ENCODE measurements at regions of chr18 and their contacts with region 1.

Region 1: GRCh38 chr18:65906621-65907034 is 155.8 kb downstream of the CDH7 start:
- DNase-seq: peak; percentile 60 to 71
- H3K4me3 ChIP-seq: no peak overlapping the region
- H3K4me3 Mint-ChIP-seq: no peak overlapping the region
- H3K27ac Mint-ChIP-seq: no peak overlapping the region
- H3K4me1 ChIP-seq: peaks cover 11% of the 10 kb centered on the region; the same call in 1 of the 2 replicates
- H3K4me1 Mint-ChIP-seq: peaks cover 6% of the 10 kb centered on the region
- H3K27me3 ChIP-seq: no peaks in the 10 kb centered on the region
- H3K27me3 Mint-ChIP-seq: no peaks in the 10 kb centered on the region
- CTCF ChIP-seq: no peak

Region 2: DNA sequence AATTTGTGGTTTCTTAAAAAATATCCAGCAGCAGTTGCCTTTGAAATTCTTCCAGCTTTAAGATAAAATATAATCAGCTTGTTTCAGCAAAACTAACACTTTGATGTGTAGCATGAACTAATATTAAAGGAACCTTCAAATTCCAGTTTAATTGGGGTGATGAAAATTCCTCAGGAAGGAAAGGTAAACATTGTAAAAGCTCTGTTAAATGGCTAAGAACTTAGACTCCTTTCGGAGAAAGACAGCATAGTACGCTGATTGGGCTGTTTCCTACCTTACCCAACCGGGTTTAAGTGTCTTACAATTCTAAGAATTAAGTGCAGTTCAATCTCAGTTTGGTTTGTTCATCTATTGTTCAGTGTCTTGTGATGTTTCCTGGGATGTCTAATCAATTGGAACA is 47.6 kb before region 1 on chr18:
- CTCF ChIA-PET with region 1: no interaction called
- POLR2A ChIA-PET with region 1: no interaction called
- intact Hi-C with region 1: loop called (anchors 1 kb)
- DNase-seq: peak in 1 of 2 experiments; percentile 1
- H3K4me3 ChIP-seq: no peak overlapping the region
- H3K4me3 Mint-ChIP-seq: peak overlapping the region; percentile 45
- H3K27ac Mint-ChIP-seq: no peak overlapping the region
- H3K4me1 ChIP-seq: no peaks in the 10 kb centered on the region
- H3K4me1 Mint-ChIP-seq: no peaks in the 10 kb centered on the region
- H3K27me3 ChIP-seq: no peaks in the 10 kb centered on the region
- H3K27me3 Mint-ChIP-seq: no peaks in the 10 kb centered on the region
- CTCF ChIP-seq: no peak

Region 3: DNA sequence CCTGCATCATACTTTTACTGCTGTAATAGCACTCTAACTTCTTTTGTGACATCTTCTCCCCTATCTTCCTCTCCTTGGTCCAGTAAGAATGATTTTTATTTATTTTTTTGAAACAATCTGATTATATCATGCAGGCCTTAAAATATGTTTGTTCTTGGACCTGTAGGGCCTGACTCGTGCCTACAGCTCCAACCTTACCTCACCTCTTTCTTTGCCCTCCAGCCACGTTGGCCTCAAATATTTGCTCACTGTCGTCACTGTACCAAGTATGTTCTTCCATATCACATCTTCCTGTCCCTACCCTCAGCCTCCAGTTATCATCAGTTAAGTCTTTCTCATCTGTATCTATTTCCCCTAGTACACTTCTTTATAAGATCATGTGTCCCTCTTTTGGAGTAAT is 30.3 kb before region 1 on chr18:
- CTCF ChIA-PET with region 1: no interaction called
- POLR2A ChIA-PET with region 1: no interaction called
- intact Hi-C with region 1: loop called (anchors 2 kb)
- DNase-seq: peak in 1 of 2 experiments; percentile 13
- H3K4me3 ChIP-seq: no peak overlapping the region
- H3K4me3 Mint-ChIP-seq: no peak overlapping the region
- H3K27ac Mint-ChIP-seq: no peak overlapping the region
- H3K4me1 ChIP-seq: 0 out of 2 replicates have a peak, but pooled peaks cover 2% of the 10 kb centered on the region
- H3K4me1 Mint-ChIP-seq: no peaks in the 10 kb centered on the region
- H3K27me3 ChIP-seq: no peaks in the 10 kb centered on the region
- H3K27me3 Mint-ChIP-seq: no peaks in the 10 kb centered on the region
- CTCF ChIP-seq: no peak

Measured in Caco-2 (cell line).